Activated CD8-positive, alpha-beta T cell treated with anti-CD3 and anti-CD28 coated beads for 36 hours (primary cell): ENCODE measurements at regions of chr4 and their contacts with region 1.

Region 1: GRCh38 chr4:173420324-173420752 is 21.4 kb upstream of the SCRG1 start:
- DNase-seq: no peak
- ATAC-seq: no peak
- H3K4me3 Mint-ChIP-seq: no peak overlapping the region
- H3K27ac Mint-ChIP-seq: no peak overlapping the region
- H3K4me1 Mint-ChIP-seq: peaks cover 6% of the 10 kb centered on the region
- H3K27me3 Mint-ChIP-seq: no peaks in the 10 kb centered on the region
- CTCF ChIP-seq: peak; percentile 42

Region 2: DNA sequence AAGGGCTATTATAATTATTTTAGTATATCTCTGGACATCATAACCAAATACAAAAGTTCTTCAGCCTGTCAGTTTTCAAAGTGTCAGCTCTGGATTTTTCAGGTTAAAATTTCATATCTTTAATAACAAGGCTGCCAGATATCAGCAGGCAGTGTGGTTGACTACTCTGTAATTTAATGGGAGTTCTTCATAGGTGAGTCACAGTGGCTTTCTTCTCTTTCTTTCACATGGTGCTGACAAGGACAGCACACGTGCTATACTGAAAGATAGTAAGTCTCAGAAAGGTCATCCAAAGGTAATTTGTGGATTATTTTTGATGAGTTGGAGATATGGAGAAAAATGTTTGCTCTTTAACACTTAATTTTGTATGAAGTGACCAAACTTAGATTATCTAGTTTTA is 208.5 kb before region 1 on chr4:
- CTCF ChIA-PET with region 1: no interaction called
- POLR2A ChIA-PET with region 1: no interaction called
- intact Hi-C with region 1: no loop called
- DNase-seq: no peak
- ATAC-seq: peak; percentile 81
- H3K4me3 Mint-ChIP-seq: no peak overlapping the region
- H3K27ac Mint-ChIP-seq: no peak overlapping the region
- H3K4me1 Mint-ChIP-seq: peaks cover 17% of the 10 kb centered on the region
- H3K27me3 Mint-ChIP-seq: no peaks in the 10 kb centered on the region
- CTCF ChIP-seq: no peak

Region 3: DNA sequence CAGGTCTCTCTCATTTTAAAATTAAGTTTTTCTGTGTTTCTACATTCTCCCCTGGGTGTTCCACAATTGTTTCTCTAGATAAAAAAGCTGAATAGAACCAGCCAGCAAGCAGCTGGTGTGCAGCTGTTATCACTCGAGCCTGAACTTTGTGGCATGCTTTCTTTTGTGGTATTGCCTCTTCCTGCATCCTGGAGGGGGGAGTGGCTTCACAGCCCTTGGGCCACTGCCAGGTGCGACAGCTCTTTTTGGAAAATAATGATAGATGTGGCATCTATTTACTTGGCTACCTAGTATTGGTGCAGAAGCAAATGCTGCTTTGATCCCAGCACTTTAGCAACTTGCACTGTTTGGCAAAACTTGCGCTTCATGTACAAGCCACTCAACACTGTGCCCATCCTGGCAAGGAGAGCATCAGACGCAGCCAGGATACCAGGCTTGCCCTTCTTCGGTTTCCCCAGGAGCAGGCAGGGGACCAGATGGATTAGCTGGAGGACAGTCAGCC is 155.6 kb before region 1 on chr4:
- CTCF ChIA-PET with region 1: no interaction called
- POLR2A ChIA-PET with region 1: no interaction called
- intact Hi-C with region 1: no loop called
- DNase-seq: peak; percentile 26
- ATAC-seq: peak; percentile 49
- H3K4me3 Mint-ChIP-seq: peak overlapping the region; percentile 0
- H3K27ac Mint-ChIP-seq: no peak overlapping the region
- H3K4me1 Mint-ChIP-seq: peaks cover 24% of the 10 kb centered on the region
- H3K27me3 Mint-ChIP-seq: no peaks in the 10 kb centered on the region
- CTCF ChIP-seq: no peak

Region 4: DNA sequence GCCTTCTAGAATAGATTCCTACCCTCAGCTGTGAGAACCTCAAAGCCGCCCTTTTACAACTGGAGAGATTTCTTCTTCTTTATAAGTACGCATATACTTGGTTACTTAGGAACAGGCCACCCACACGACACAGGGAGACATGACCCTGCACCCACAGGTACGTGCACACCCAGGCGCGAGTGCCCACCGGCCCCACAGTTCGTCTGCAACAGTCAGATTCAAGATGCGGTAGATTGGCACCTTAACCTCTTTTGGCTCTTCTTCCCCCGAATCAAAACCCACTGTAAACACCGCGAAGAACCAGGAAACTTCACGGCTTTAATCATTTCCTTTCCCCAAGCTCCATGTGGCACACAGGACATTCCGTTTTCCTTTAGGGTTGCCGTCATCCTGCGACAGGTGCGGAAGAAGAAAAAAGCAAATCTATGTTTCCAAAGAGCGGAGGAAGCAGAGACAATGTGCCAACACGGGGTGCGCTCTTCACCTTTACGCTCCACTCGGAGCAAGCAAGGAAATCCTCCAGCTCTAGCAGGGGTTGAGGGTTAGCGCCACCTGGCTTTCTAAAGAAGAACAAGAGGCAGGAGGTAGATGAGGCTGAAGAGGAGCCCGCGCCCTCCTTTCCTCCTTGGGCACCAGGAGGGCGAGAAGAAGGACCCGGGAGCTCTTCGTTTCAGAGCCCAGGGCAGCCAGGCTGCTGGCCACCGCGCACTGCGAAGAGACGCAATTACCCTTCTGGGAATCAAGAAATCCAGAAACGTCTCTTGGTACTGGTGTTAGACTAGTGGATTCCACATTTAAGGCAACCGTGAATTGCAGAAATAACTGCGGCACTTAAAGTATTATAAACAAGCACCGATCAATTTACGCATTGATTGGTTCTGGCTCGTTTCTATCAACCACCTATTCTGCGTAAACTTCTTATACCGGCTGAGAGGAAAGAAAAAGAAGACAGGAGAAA is 74.0 kb after region 1 on chr4:
- CTCF ChIA-PET with region 1: interaction called, 29 read pairs
- POLR2A ChIA-PET with region 1: no interaction called
- intact Hi-C with region 1: loop called (anchors 2 kb)
- DNase-seq: peak; percentile 78
- ATAC-seq: peak; percentile 97
- H3K4me3 Mint-ChIP-seq: peak overlapping the region; percentile 78
- H3K27ac Mint-ChIP-seq: no peak overlapping the region
- H3K4me1 Mint-ChIP-seq: peaks cover 7% of the 10 kb centered on the region
- H3K27me3 Mint-ChIP-seq: peaks cover 26% of the 10 kb centered on the region
- CTCF ChIP-seq: peak; percentile 66